Activated CD4-positive, alpha-beta T cell treated with anti-CD3 and anti-CD28 coated beads, Interleukin-2, amount 10 ng/mL, durations not matched to agents 24 days and 14 days (primary cell): ENCODE measurements at regions of chr1 and their contacts with region 1.

Region 1: DNA sequence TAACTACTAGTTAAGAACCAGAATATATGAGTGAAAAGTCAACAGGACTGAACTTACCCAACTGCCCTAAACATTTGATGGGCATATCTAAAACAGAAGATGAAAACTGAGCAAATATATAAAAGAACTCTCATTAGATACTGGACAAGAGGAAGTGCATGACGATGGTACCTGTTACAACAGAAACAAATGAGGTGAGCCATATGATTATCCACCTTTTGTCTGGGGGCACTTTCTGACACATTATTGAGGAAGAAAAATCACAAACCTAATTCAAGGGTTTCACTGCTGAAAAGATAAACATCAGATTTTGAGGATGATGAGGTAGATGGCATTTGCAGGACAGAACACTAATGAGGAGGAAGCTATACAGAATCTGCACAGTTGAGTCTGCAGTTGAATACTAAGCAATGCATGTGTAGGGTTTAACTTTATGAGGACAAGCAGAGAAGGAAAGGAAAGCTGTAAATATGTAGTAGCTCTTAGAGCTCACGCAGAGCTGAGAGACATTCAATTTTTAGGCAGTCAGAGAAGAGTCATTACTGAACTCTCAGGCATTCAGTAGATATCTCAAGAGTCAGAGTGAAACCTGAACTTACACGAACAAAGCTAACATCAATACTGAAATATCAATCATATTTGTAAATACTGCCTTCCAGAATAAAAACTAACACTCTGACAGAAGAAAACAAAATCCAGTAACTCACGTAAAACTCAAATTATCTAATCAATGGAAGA is 262.1 kb downstream of the AKT3 start:
- DNase-seq: no peak
- H3K4me3 Mint-ChIP-seq: peak overlapping the region; percentile 6
- H3K27ac Mint-ChIP-seq: peak overlapping the region; percentile 57
- H3K4me1 Mint-ChIP-seq: peaks cover 13% of the 10 kb centered on the region
- H3K27me3 Mint-ChIP-seq: no peaks in the 10 kb centered on the region

Region 2: DNA sequence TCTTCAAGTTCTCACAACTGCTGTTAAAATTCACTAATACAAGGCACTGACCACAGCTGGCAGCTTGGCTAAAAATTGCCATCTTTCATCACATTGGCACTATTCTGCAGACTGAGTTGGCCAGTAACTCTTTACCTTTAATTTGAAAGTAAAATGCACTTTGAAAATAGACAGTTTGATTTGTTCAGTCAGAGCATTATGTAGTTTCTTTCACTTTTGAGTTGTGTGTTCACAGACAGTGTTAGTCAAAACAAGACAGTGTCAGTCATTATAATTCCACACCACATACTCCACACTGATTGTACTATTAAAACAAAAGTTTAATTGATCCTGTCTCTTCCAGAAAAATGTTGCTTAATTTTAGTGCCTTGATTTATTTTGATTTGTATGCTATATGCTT is 171.5 kb before region 1 on chr1:
- intact Hi-C with region 1: loop called (anchors 2 kb)
- DNase-seq: no peak
- H3K4me3 Mint-ChIP-seq: peak overlapping the region; percentile 68
- H3K27ac Mint-ChIP-seq: peak overlapping the region; percentile 72
- H3K4me1 Mint-ChIP-seq: peaks cover 51% of the 10 kb centered on the region
- H3K27me3 Mint-ChIP-seq: no peaks in the 10 kb centered on the region